Breast epithelium (tissue), 4 donors: ENCODE measurements at regions of chr16 and their contacts with region 1.

Region 1: GRCh38 chr16:80666378-80667250 is 125.8 kb downstream of the DYNLRB2 start:
- DNase-seq: no peak
- H3K4me3 ChIP-seq: no peak overlapping the region
- H3K27ac ChIP-seq: no peak overlapping the region
- H3K4me1 ChIP-seq: no peaks in the 10 kb centered on the region
- H3K27me3 ChIP-seq: no peaks in the 10 kb centered on the region
- CTCF ChIP-seq: no peak
- POLR2A ChIP-seq: no peak

Region 2: DNA sequence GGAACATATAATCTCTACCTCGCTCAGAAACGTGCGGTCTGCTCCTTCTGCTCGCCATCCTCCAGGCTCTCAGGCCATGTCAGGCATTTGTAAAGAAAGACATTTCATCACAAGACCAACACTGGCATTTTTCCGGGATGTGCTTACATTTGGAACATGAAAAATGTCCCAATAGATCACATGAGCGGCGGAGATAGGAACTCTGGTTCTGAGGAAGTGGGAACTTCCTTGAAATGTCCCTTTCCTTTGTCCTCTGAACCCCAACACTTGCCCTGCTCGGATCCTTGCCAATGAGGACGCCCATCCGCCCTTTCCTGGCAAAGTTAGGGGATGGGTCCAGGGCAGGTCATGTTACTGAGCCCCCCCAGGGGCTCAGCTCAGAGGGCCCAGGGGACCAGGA is 1196.6 kb before region 1 on chr16:
- intact Hi-C with region 1: loop called (anchors 5 kb)
- DNase-seq: no peak
- H3K4me3 ChIP-seq: no peak overlapping the region
- H3K27ac ChIP-seq: no peak overlapping the region
- H3K4me1 ChIP-seq: no peaks in the 10 kb centered on the region
- H3K27me3 ChIP-seq: no peaks in the 10 kb centered on the region
- CTCF ChIP-seq: no peak
- POLR2A ChIP-seq: no peak

Region 3: GRCh38 chr16:80718249-80719220 is 51.9 kb after region 1 on chr16:
- intact Hi-C with region 1: loop called (anchors 2 kb)
- DNase-seq: peak; percentile 83 to 84
- H3K4me3 ChIP-seq: no peak overlapping the region
- H3K27ac ChIP-seq: peak overlapping the region; percentile 64 to 67
- H3K4me1 ChIP-seq: no peaks in the 10 kb centered on the region
- H3K27me3 ChIP-seq: no peaks in the 10 kb centered on the region
- CTCF ChIP-seq: no peak
- POLR2A ChIP-seq: no peak

Region 4: DNA sequence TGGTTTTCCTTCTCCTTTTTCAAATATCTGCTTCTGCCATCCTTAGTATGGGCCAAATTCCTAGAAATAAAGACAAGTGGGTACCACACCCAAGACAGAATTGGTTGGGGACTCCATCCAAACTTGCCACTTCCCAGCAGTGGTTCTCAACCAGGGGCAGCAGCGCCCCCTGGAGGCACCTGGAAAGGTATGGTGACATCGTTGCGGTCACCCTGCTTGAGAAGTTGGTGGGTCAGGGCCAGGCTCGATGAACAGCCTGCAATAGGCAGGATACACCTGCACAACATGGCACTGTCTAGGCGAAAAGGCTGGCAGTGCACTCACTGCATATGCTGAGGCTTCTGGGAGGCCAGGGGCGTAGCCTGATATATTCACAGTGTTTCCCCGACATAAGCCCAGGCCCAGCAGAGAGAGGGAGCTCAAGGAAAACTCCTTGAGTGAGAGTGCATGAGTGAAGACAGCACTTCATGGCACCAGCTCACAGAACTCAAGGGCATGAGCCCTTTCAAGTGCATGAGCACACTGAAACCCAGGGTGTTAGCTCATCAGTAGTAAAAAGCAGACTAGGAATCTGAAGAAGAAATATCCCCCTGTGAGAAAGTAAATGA is 282.4 kb after region 1 on chr16:
- intact Hi-C with region 1: no loop called
- DNase-seq: no peak
- H3K4me3 ChIP-seq: no peak overlapping the region
- H3K27ac ChIP-seq: no peak overlapping the region
- H3K4me1 ChIP-seq: no peaks in the 10 kb centered on the region
- H3K27me3 ChIP-seq: no peaks in the 10 kb centered on the region
- CTCF ChIP-seq: no peak
- POLR2A ChIP-seq: no peak